IMR-90 (cell line): ENCODE measurements at regions of chr20 and their contacts with region 1.

Region 1: DNA sequence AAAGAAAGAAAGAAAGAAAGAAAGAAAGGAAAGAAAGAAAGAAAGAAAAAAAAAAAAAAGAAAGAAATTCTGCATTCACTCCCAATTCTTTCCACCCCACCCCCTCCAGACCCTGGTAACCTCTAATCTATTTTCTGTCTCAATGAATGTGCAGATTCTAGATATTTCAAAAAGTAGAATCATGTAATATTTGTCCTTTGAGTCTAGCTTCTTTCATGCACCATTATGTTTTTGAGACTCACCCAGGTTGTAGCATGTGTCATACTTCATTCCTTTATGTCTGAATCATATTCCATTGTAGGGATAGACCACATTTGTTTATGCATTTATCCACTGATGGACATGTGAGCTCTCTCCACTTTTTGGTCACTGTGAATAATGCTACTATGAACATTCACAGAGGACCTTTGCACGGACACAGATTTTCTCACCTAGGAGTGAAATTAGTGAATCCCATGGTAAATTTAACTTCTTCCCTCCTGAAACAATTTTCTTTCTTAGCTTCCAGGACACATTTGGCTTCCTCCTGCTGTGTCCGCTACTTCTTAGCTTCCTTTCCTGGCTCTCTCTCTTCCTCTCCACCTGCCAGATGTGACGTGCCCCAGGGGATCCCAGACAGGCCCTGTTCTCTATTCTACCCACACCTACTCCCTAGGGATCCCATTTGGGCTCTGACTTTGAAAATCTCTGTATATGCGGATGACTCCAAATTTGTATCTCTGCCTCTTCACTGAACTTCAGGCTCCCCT is 24.1 kb upstream of the ARFGEF2 start:
- DNase-seq: peak; percentile 92
- ATAC-seq: peak; percentile 92
- H3K4me3 ChIP-seq: no peak overlapping the region
- H3K27ac ChIP-seq: no peak overlapping the region
- H3K4me1 ChIP-seq: peaks cover 5% of the 10 kb centered on the region; the same call in 1 of the 2 replicates
- H3K27me3 ChIP-seq: peaks cover 13% of the 10 kb centered on the region
- CTCF ChIP-seq: no peak
- POLR2A ChIP-seq: no peak
- RAD21 ChIP-seq: no peak

Region 2: GRCh38 chr20:48787861-48788375 is 109.5 kb before region 1 on chr20:
- CTCF ChIA-PET with region 1: interaction called, 7 read pairs
- POLR2A ChIA-PET with region 1: no interaction called
- dilution Hi-C with region 1: no loop called
- in situ Hi-C with region 1: loop called (anchors 25 kb)
- intact Hi-C with region 1: no loop called
- DNase-seq: peak; percentile 47
- ATAC-seq: peak; percentile 57; the same call in 1 of the 2 replicates
- H3K4me3 ChIP-seq: no peak overlapping the region
- H3K27ac ChIP-seq: no peak overlapping the region
- H3K4me1 ChIP-seq: peaks cover 2% of the 10 kb centered on the region; the same call in 1 of the 2 replicates
- H3K27me3 ChIP-seq: peaks cover 6% of the 10 kb centered on the region
- CTCF ChIP-seq: no peak
- POLR2A ChIP-seq: no peak
- RAD21 ChIP-seq: no peak

Region 3: GRCh38 chr20:48841847-48842529 is 55.4 kb before region 1 on chr20:
- CTCF ChIA-PET with region 1: no interaction called
- POLR2A ChIA-PET with region 1: no interaction called
- dilution Hi-C with region 1: no loop called
- in situ Hi-C with region 1: no loop called
- intact Hi-C with region 1: loop called (anchors 5 kb)
- DNase-seq: peak; percentile 82
- ATAC-seq: peak; percentile 88
- H3K4me3 ChIP-seq: no peak overlapping the region
- H3K27ac ChIP-seq: no peak overlapping the region
- H3K4me1 ChIP-seq: peaks cover 3% of the 10 kb centered on the region
- H3K27me3 ChIP-seq: peaks cover 3% of the 10 kb centered on the region
- CTCF ChIP-seq: no peak
- POLR2A ChIP-seq: no peak
- RAD21 ChIP-seq: no peak